ENCODE measurements at regions of chr5 and their contacts with region 1.

Region 1: GRCh38 chr5:59799668-59800346 is 93.7 kb downstream of the PDE4D start:
- DNase-seq: peak; percentile 61
- H3K4me3 ChIP-seq: no peak overlapping the region
- H3K27ac ChIP-seq: peak overlapping the region; percentile 21
- H3K4me1 ChIP-seq: peaks cover 13% of the 10 kb centered on the region
- H3K27me3 ChIP-seq: no peaks in the 10 kb centered on the region
- CTCF ChIP-seq: peak; percentile 56 to 62

Region 2: GRCh38 chr5:59188419-59189225 is 611.2 kb before region 1 on chr5:
- CTCF ChIA-PET with region 1: no interaction called
- dilution Hi-C with region 1: no loop called
- in situ Hi-C with region 1: loop called (anchors 25 kb)
- intact Hi-C with region 1: loop called (anchors 5 kb)
- DNase-seq: peak; percentile 40
- H3K4me3 ChIP-seq: no peak overlapping the region
- H3K27ac ChIP-seq: no peak overlapping the region
- H3K4me1 ChIP-seq: peaks cover 5% of the 10 kb centered on the region
- H3K27me3 ChIP-seq: no peaks in the 10 kb centered on the region
- CTCF ChIP-seq: peak; percentile 54 to 70

Region 3: GRCh38 chr5:59390074-59390659 is 409.6 kb before region 1 on chr5:
- CTCF ChIA-PET with region 1: no interaction called
- dilution Hi-C with region 1: no loop called
- in situ Hi-C with region 1: loop called (anchors 10 kb)
- intact Hi-C with region 1: loop called (anchors 1 kb)
- DNase-seq: no peak
- H3K4me3 ChIP-seq: no peak overlapping the region
- H3K27ac ChIP-seq: no peak overlapping the region
- H3K4me1 ChIP-seq: no peaks in the 10 kb centered on the region
- H3K27me3 ChIP-seq: no peaks in the 10 kb centered on the region
- CTCF ChIP-seq: peak; percentile 53 to 68

Region 4: GRCh38 chr5:59506285-59506877 is 293.4 kb before region 1 on chr5:
- CTCF ChIA-PET with region 1: no interaction called
- dilution Hi-C with region 1: no loop called
- in situ Hi-C with region 1: loop called in 1 of 2 experiments (anchors 10 kb)
- intact Hi-C with region 1: loop called (anchors 1 kb)
- DNase-seq: no peak
- H3K4me3 ChIP-seq: no peak overlapping the region
- H3K27ac ChIP-seq: no peak overlapping the region
- H3K4me1 ChIP-seq: no peaks in the 10 kb centered on the region
- H3K27me3 ChIP-seq: no peaks in the 10 kb centered on the region
- CTCF ChIP-seq: peak; percentile 42 to 54

Region 5: DNA sequence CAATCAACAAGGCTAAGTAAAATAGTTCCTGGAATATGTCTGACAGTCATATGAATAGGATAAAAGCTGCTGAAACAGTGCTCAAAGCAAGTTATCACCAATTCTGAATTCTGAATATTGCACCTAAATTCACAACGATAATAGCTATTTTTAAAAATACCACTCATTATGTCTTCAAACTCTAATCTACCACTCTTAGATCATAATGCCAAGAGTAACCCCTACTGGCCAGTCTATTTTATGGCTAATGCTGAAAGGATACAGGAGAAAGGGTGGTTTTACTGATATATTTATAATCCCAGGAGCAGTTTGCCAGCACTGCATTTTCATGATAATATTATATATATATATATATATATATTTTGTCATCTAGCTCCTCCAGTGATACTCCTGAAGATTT is 139.1 kb before region 1 on chr5:
- CTCF ChIA-PET with region 1: no interaction called
- dilution Hi-C with region 1: no loop called
- in situ Hi-C with region 1: no loop called
- intact Hi-C with region 1: loop called (anchors 2 kb)
- DNase-seq: no peak
- H3K4me3 ChIP-seq: no peak overlapping the region
- H3K27ac ChIP-seq: no peak overlapping the region
- H3K4me1 ChIP-seq: no peaks in the 10 kb centered on the region
- H3K27me3 ChIP-seq: no peaks in the 10 kb centered on the region
- CTCF ChIP-seq: peak; percentile 23 to 59

Region 6: GRCh38 chr5:59745422-59745863 is 54.4 kb before region 1 on chr5:
- CTCF ChIA-PET with region 1: no interaction called
- dilution Hi-C with region 1: no loop called
- in situ Hi-C with region 1: loop called in 1 of 2 experiments (anchors 10 kb)
- intact Hi-C with region 1: no loop called
- DNase-seq: peak; percentile 74
- H3K4me3 ChIP-seq: no peak overlapping the region
- H3K27ac ChIP-seq: peak overlapping the region; percentile 90
- H3K4me1 ChIP-seq: peaks cover 33% of the 10 kb centered on the region
- H3K27me3 ChIP-seq: no peaks in the 10 kb centered on the region
- CTCF ChIP-seq: no peak

Region 7: DNA sequence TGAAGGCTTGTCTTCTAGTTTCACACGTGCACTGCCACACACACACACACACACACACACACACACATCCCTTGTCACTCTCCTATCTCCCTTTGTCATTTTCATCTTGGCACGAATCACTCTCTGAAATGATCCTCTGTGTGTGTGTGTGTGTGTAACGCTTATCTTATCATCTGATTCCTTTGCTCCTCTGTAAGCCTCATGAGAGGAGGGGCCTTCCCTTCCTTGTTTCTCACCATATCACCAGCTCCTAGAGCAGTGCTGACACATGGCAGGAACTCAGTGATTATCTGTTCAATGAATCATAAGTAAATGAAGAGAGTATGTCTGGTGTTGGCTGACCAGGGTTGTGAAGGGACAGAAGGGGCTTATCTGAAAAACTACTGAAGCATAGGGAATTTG is 40.4 kb after region 1 on chr5:
- CTCF ChIA-PET with region 1: no interaction called
- dilution Hi-C with region 1: no loop called
- in situ Hi-C with region 1: no loop called
- intact Hi-C with region 1: no loop called
- DNase-seq: peak; percentile 3
- H3K4me3 ChIP-seq: no peak overlapping the region
- H3K27ac ChIP-seq: no peak overlapping the region
- H3K4me1 ChIP-seq: no peaks in the 10 kb centered on the region
- H3K27me3 ChIP-seq: no peaks in the 10 kb centered on the region
- CTCF ChIP-seq: no peak

Measured in mammary epithelial cell (primary cell).